ENCODE measurements at regions of chr2 and their contacts with region 1.

Region 1: DNA sequence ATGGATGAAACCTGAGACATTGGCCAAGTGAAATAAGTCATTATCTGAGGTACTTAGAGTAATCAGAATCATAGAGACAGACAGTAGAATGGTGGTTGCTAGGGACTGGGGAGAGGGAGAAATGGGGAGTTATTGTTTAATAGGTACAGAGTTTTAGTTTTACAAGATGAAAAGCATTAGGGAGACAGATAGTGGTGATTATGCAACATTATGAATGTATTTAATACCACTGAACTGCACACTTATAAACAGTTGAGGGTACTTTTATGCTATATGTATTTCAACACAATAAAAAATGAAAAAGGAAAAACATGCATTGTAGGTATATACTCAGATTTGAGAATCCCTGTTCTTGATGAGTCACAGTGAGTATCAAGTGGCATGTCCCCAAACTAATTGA is 59.7 kb downstream of the EPC2 start:
- DNase-seq: no peak
- ATAC-seq: no peak
- H3K4me3 ChIP-seq: no peak overlapping the region
- H3K27ac ChIP-seq: no peak overlapping the region
- H3K4me1 ChIP-seq: no peaks in the 10 kb centered on the region
- H3K27me3 ChIP-seq: no peaks in the 10 kb centered on the region
- CTCF ChIP-seq: no peak
- POLR2A ChIP-seq: no peak
- RAD21 ChIP-seq: no peak

Region 2: DNA sequence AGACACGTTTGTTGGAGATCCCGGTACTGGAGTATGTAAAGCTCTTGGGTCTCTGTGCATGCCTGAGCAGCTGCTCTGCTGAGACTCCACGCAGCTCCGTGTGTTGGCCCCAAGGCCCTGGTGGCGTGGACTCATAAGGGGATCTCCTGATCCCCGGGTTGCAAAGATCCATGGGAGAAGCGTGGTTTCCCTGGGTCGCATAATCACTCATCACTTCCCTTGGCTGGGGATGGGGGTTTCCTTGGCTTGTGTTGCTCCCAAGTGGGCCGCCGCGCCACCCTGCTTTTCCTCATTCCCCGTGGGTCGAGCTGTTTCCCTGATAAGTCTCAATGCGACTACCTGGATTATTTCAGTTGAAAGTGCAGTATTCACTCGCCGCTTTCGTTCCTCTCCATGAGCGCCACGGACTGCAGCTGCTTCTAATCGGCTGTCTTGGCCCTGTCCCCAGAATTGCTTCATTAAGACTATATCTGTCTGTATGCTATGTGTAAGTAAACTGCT is 16.3 kb after region 1 on chr2:
- CTCF ChIA-PET with region 1: no interaction called
- POLR2A ChIA-PET with region 1: no interaction called
- RAD21 ChIA-PET with region 1: no interaction called
- intact Hi-C with region 1: loop called (anchors 1 kb)
- DNase-seq: no peak
- ATAC-seq: no peak
- H3K4me3 ChIP-seq: no peak overlapping the region
- H3K27ac ChIP-seq: no peak overlapping the region
- H3K4me1 ChIP-seq: 0 out of 4 replicates have a peak, but pooled peaks cover 0 to 2% of the 10 kb centered on the region in 2 experiments
- H3K27me3 ChIP-seq: no peaks in the 10 kb centered on the region
- CTCF ChIP-seq: no peak
- POLR2A ChIP-seq: no peak
- RAD21 ChIP-seq: no peak

Region 3: DNA sequence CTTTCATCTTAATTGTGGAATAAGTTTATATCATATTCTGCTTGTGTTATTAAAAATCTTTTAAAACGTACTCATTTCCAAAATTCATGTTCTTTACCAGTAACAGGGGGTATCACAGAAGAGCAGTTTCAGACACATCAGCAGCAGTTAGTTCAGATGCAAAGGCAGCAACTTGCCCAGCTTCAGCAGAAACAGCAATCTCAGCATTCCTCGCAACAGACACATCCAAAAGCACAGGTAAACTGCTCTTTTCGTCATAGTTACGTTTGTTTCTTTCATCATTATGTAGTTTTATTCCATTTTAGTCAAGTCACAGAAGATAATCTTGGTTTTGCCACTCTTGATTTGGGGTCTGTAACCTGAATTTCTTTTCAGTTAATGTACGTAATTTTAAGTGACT is 77.3 kb after region 1 on chr2:
- CTCF ChIA-PET with region 1: no interaction called
- POLR2A ChIA-PET with region 1: no interaction called
- RAD21 ChIA-PET with region 1: no interaction called
- intact Hi-C with region 1: no loop called
- DNase-seq: no peak
- ATAC-seq: no peak
- H3K4me3 ChIP-seq: no peak overlapping the region
- H3K27ac ChIP-seq: no peak overlapping the region
- H3K4me1 ChIP-seq: no peaks in the 10 kb centered on the region
- H3K27me3 ChIP-seq: no peaks in the 10 kb centered on the region
- CTCF ChIP-seq: no peak
- POLR2A ChIP-seq: no peak
- RAD21 ChIP-seq: no peak

Region 4: GRCh38 chr2:149040451-149040850 is 336.2 kb after region 1 on chr2:
- CTCF ChIA-PET with region 1: no interaction called
- POLR2A ChIA-PET with region 1: no interaction called
- RAD21 ChIA-PET with region 1: no interaction called
- intact Hi-C with region 1: no loop called
- DNase-seq: peak; percentile 42
- ATAC-seq: peak; percentile 20
- H3K4me3 ChIP-seq: no peak overlapping the region
- H3K27ac ChIP-seq: no peak overlapping the region
- H3K4me1 ChIP-seq: peaks cover 2 to 15% of the 10 kb centered on the region in 2 experiments; a peak in 2 of 4 replicates
- H3K27me3 ChIP-seq: no peaks in the 10 kb centered on the region
- CTCF ChIP-seq: peak; percentile 25 to 74 (median 64); a peak in 4 of 6 replicates
- POLR2A ChIP-seq: no peak
- RAD21 ChIP-seq: peak; percentile 48

Region 5: DNA sequence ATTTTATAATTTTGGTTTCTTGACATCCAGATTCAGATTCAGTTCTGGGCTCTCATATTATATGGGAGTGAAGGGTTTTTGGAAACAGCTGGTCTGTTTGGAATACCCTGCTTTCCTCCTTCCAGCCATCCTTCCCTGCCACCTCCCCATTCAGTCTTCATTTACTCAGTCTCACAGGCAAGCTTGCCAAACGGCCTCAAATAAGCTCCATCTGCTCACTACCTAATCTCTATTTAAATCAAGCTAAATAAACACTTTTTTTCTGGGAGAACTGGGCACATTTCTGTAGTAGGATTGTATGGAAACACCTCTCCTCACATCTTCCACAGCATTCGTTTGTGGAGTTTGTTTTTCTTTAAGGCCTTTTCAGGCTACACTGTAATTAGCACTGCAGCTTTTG is 1635.7 kb after region 1 on chr2:
- CTCF ChIA-PET with region 1: no interaction called
- POLR2A ChIA-PET with region 1: no interaction called
- RAD21 ChIA-PET with region 1: no interaction called
- intact Hi-C with region 1: no loop called
- DNase-seq: no peak
- ATAC-seq: no peak
- H3K4me3 ChIP-seq: no peak overlapping the region
- H3K27ac ChIP-seq: no peak overlapping the region
- H3K4me1 ChIP-seq: no peaks in the 10 kb centered on the region
- H3K27me3 ChIP-seq: no peaks in the 10 kb centered on the region
- CTCF ChIP-seq: no peak
- POLR2A ChIP-seq: no peak
- RAD21 ChIP-seq: no peak